Activated naive CD4-positive, alpha-beta T cell treated with anti-CD3 and anti-CD28 coated beads for 36 hours (primary cell): ENCODE measurements at regions of chr6 and their contacts with region 1.

Region 1: GRCh38 chr6:2988426-2989331 is 11.0 kb upstream of the NQO2 start:
- DNase-seq: peak; percentile 84
- H3K4me3 Mint-ChIP-seq: peak overlapping the region; percentile 87
- H3K27ac Mint-ChIP-seq: peak overlapping the region; percentile 97
- H3K4me1 Mint-ChIP-seq: peaks cover 12% of the 10 kb centered on the region
- H3K27me3 Mint-ChIP-seq: no peaks in the 10 kb centered on the region

Region 2: DNA sequence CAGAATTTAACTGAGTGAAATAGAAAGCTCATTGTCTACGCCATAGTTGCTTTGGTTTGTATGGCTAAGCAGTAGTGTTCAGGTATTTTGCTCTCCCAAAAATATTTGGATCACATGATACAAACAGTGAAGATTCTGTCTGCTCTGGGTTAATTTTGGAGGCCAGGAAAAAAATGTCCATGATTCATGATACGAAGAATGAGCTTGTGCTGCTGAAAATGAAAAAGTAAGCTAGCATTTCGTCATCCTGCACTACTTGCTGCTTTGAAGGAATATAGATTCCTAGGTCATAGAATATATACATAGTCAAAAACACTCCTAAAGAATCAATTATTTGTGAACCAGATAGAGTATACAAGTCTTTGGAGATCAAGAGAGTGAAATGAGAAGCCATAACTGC is 215.2 kb before region 1 on chr6:
- CTCF ChIA-PET with region 1: no interaction called
- intact Hi-C with region 1: no loop called
- DNase-seq: no peak
- H3K4me3 Mint-ChIP-seq: no peak overlapping the region
- H3K27ac Mint-ChIP-seq: no peak overlapping the region
- H3K4me1 Mint-ChIP-seq: peaks cover 37% of the 10 kb centered on the region
- H3K27me3 Mint-ChIP-seq: no peaks in the 10 kb centered on the region

Region 3: GRCh38 chr6:2791124-2791974 is 197.3 kb before region 1 on chr6:
- CTCF ChIA-PET with region 1: interaction called, 18 read pairs
- intact Hi-C with region 1: loop called (anchors 1 kb)
- DNase-seq: peak; percentile 87
- H3K4me3 Mint-ChIP-seq: no peak overlapping the region
- H3K27ac Mint-ChIP-seq: no peak overlapping the region
- H3K4me1 Mint-ChIP-seq: peaks cover 39% of the 10 kb centered on the region
- H3K27me3 Mint-ChIP-seq: no peaks in the 10 kb centered on the region

Region 4: DNA sequence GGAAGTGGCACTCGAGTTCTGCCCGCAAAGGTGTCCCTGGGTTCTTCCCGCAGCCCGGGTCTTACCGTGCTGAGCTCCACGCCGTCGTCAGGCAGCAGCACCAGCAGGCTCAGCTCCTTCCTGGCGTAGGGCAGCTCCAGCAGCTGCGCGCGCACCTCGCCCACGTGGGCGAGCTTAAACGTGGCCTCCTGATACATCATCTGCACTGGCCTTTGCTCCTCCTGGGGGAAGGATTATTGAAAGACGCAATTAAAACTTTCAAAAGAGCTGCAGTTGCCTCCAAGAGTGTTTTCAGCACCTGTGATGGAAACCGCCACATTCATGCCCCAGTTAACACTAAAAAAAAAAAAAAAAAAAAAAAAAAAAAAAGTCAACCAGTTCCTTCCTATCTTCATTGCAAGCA is 96.9 kb before region 1 on chr6:
- CTCF ChIA-PET with region 1: interaction called, 4 read pairs
- intact Hi-C with region 1: loop called (anchors 2 kb)
- DNase-seq: peak; percentile 85
- H3K4me3 Mint-ChIP-seq: peak overlapping the region; percentile 75
- H3K27ac Mint-ChIP-seq: peak overlapping the region; percentile 88
- H3K4me1 Mint-ChIP-seq: peaks cover 71% of the 10 kb centered on the region
- H3K27me3 Mint-ChIP-seq: no peaks in the 10 kb centered on the region

Region 5: DNA sequence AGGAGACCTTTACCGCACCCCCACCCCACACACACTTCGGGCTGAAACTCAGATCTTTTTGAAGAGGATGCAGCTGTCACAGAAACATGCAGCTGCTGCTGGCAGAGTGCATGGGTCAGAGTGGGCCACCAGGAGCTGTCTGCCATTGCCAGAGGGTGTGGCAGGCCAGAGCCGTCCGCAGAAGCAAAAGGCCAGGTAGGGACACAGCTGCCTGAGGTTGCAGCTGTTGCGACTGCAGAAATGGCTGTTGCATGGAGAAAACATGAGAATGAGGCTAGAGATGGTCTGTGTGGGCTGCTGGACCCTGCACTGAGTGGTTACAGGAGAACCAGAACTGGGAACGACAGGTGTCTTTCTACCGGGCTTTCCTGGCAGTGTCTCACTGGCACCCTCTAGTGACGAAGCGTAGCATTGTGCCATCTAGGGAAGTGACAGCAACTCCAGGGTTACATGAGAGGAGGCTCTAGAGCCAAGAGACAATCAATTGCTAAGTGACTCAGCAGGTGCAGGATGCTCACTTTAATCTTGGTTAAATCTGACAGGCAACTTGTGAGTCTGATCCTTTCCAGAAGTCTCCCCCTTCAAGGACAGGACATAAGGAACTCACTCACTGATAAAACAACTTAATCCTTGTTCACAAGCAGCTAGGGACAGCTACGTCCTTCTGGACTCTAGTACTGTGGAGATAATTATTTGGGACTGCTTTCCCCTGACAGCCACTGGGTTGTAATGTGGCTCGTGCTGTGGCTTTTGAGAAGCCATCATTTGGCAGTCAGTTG is 56.5 kb before region 1 on chr6:
- CTCF ChIA-PET with region 1: interaction called, 16 read pairs
- intact Hi-C with region 1: no loop called
- DNase-seq: peak; percentile 96
- H3K4me3 Mint-ChIP-seq: peak overlapping the region; percentile 47
- H3K27ac Mint-ChIP-seq: peak overlapping the region; percentile 52
- H3K4me1 Mint-ChIP-seq: peaks cover 22% of the 10 kb centered on the region
- H3K27me3 Mint-ChIP-seq: no peaks in the 10 kb centered on the region

Region 6: DNA sequence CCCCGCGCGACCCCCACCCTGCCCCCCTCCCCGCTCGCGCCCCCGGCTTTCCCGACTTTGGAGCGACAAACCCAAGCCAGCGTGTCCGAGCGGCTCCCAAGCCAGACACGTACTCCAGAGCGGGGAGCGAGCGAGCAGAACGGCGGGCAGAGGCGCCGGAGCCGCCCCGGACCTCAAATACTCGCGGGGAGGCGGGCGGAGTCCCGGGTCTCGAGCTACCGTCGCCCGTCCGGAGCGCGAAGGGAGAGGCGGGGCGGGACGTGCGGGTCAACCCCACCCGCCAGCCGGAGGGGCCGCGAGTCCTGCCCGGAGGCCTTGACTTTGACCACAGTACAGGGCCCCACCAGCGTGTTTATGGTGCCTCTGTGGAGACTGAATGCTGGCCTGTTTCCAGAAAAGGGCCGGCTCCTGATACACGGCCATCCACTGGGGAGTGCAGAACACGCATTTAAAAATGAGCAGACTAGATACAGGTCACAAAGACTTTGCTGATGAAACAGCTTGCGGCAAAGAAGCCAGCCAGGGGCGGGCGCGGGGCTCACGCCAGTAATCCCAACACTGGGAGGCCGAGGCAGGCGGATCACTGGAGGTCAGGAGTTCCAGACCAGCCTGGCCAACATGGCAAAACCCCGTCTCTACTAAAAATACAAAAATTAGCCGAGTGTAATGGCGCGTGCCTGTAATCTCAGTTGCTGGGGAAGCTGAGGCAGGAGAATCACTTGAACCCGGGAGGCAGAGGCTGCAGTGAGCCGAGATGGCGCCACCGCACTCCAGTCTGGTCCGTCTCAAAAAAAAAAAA is 17.1 kb before region 1 on chr6 and contains the start of gene SERPINB6:
- CTCF ChIA-PET with region 1: interaction called, 5 read pairs
- intact Hi-C with region 1: loop called (anchors 1 kb)
- DNase-seq: peak; percentile 39
- H3K4me3 Mint-ChIP-seq: peak within 1 kb of the TSS; percentile 82
- H3K27ac Mint-ChIP-seq: peak within 1 kb of the TSS; percentile 84
- H3K4me1 Mint-ChIP-seq: peaks cover 36% of the 10 kb centered on the region
- H3K27me3 Mint-ChIP-seq: peaks cover 4% of the 10 kb centered on the region
- total RNA-seq, gene SERPINB6: 31.2 to 31.4 TPM

Region 7: DNA sequence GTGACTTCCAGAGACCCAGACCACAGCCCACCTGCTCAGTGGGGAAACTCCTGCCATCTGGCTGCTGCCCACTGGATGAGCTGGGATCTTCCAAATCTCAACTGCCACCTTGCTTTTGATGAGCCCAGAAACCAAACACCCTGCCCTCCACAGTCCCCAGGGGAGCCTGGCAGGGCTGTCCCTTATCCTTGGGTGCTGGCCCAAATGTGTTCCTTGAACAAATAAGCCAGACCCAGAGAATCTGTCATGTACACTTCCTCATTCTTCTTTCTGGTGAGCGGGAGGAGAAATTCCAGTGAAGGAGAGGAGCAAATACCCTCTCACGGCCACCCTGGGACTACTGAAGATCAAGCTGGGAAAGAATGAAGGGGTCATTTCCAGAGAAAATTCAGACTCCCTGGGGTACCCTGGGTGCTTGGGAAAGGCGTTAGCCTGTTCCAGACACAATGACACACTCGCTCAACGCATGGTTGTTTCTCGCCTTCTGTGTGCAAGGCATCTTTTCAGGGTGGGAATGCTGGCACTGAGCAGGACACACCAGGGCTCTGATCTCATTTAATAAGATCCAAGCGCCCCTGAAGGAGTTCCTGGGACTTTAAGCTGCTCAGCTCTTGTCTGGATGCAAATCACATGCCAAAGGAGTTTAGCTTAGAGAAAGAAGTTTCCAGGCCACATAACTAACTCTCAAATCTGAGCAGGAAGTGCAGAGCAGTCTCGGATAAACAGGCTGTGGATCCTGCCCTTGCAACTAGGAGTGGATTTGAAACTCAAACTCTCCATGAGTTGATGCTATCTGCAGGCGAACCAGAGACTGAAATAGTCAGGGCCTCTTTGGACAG is 724.4 kb after region 1 on chr6:
- CTCF ChIA-PET with region 1: no interaction called
- intact Hi-C with region 1: no loop called
- DNase-seq: no peak
- H3K4me3 Mint-ChIP-seq: no peak overlapping the region
- H3K27ac Mint-ChIP-seq: no peak overlapping the region
- H3K4me1 Mint-ChIP-seq: no peaks in the 10 kb centered on the region
- H3K27me3 Mint-ChIP-seq: no peaks in the 10 kb centered on the region